Activated B cell treated with CpG ODN at 0.5 μM for 24 hours (primary cell): ENCODE measurements at regions of chr5 and their contacts with region 1.

Region 1: DNA sequence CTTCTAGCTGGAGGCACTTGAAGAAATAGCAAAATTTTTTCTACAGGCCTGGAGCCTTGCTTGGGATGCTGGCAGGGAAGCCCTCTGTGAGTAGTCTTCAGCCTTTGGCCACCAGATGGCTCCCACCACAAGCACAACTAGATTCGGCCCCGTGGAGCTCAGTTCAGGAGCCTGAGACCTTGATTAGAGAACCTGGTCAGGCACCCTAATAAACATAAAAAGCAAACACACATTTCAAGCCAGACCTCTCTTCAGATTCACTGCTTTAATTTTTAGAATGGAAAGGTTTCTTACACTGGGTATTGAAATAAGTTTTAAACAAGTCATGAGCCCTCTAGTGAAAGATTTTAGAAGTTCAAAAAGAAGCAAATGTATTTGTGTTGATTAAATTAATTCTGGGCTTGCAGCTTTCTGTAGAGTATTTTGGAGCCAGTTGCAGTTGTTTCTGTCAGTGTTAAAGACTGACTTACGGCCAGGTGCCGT is 41.4 kb downstream of the GLRX start:
- DNase-seq: peak; percentile 46
- ATAC-seq: peak; percentile 99
- H3K4me3 Mint-ChIP-seq: peak overlapping the region; percentile 21
- H3K27ac Mint-ChIP-seq: peak overlapping the region; percentile 43
- H3K4me1 Mint-ChIP-seq: peaks cover 7% of the 10 kb centered on the region
- H3K27me3 Mint-ChIP-seq: no peaks in the 10 kb centered on the region
- CTCF ChIP-seq: no peak

Region 2: GRCh38 chr5:95760273-95761191 is 20.6 kb before region 1 on chr5:
- CTCF ChIA-PET with region 1: interaction called, 11 read pairs
- POLR2A ChIA-PET with region 1: no interaction called
- intact Hi-C with region 1: no loop called
- DNase-seq: no peak
- ATAC-seq: peak; percentile 82
- H3K4me3 Mint-ChIP-seq: peak overlapping the region; percentile 74
- H3K27ac Mint-ChIP-seq: peak overlapping the region; percentile 89
- H3K4me1 Mint-ChIP-seq: peaks cover 42% of the 10 kb centered on the region
- H3K27me3 Mint-ChIP-seq: no peaks in the 10 kb centered on the region
- CTCF ChIP-seq: no peak

Region 3: DNA sequence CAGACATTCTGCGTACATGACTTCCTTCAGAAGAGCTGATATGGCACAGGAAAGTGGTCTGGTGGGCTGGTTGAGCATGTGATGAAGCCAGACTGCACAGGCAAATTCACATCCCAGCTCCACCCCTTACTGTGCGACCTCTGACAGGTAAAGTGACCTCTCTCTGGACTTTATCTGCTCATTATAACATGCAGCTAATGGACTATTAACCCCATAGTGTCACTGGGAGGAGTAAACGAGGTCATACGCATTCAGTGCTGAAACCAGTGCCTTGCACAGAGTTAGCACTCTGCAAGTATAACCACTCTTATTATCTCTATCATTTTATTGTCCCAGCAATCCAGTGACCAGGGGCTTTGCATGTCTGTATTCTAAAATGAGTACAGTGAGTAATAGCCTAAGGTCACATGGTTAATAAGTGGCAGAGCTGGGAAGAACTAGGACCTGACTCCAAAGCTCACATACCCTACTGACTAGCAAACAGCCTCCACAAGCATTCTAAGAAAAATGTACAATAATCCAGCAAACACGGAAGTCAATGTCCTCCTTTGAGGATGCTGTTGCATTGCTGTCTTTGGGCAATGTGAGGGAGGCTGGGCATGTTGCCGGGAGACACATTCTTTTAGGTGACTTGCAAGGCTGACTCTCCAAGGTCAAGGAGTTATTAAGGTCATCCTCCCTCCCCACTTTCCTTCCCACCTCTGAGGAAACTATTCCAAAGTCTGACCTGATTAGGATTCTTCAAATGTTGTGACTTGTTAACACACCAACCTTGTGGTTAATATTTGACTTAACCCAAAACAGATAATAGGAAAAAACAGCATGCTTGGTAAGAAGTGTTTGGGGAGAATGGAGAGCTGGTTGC is 22.4 kb after region 1 on chr5:
- CTCF ChIA-PET with region 1: interaction called, 63 read pairs
- POLR2A ChIA-PET with region 1: interaction called, 12 read pairs
- intact Hi-C with region 1: loop called (anchors 1 kb)
- DNase-seq: no peak
- ATAC-seq: no peak
- H3K4me3 Mint-ChIP-seq: no peak overlapping the region
- H3K27ac Mint-ChIP-seq: no peak overlapping the region
- H3K4me1 Mint-ChIP-seq: peaks cover 12% of the 10 kb centered on the region
- H3K27me3 Mint-ChIP-seq: no peaks in the 10 kb centered on the region
- CTCF ChIP-seq: no peak

Region 4: GRCh38 chr5:95822542-95823181 is 41.5 kb after region 1 on chr5 and contains the start of gene GLRX:
- CTCF ChIA-PET with region 1: interaction called, 32 read pairs
- POLR2A ChIA-PET with region 1: interaction called, 16 read pairs
- intact Hi-C with region 1: loop called (anchors 1 kb)
- DNase-seq: no peak
- ATAC-seq: peak; percentile 30
- H3K4me3 Mint-ChIP-seq: peak within 1 kb of the TSS; percentile 95
- H3K27ac Mint-ChIP-seq: peak within 1 kb of the TSS; percentile 98
- H3K4me1 Mint-ChIP-seq: peaks cover 72% of the 10 kb centered on the region
- H3K27me3 Mint-ChIP-seq: no peaks in the 10 kb centered on the region
- CTCF ChIP-seq: no peak
- total RNA-seq, gene GLRX: 55.4 and 60.2 TPM in 2 replicates

Region 5: DNA sequence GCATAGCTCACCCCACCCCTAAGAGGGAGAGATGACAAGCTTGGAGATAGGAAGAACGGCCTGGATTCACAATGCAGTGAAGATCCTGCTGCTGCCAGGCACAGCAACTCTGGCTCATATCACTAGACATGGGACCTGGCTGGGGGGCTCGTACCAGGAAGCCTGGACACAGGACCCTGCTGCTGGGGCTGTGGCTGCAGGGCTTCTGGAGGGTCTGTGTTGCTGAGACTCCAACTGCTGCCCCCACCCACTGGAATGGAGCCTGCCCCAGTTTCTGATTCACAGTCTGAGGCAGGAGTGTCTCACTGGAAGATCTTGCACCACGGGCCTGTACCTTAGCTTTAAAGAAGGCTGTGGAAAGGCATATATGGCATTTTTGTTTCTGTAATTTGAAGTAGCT is 72.3 kb after region 1 on chr5:
- CTCF ChIA-PET with region 1: interaction called, 389 read pairs
- POLR2A ChIA-PET with region 1: no interaction called
- intact Hi-C with region 1: no loop called
- DNase-seq: no peak
- ATAC-seq: no peak
- H3K4me3 Mint-ChIP-seq: no peak overlapping the region
- H3K27ac Mint-ChIP-seq: no peak overlapping the region
- H3K4me1 Mint-ChIP-seq: no peaks in the 10 kb centered on the region
- H3K27me3 Mint-ChIP-seq: no peaks in the 10 kb centered on the region
- CTCF ChIP-seq: no peak

Region 6: DNA sequence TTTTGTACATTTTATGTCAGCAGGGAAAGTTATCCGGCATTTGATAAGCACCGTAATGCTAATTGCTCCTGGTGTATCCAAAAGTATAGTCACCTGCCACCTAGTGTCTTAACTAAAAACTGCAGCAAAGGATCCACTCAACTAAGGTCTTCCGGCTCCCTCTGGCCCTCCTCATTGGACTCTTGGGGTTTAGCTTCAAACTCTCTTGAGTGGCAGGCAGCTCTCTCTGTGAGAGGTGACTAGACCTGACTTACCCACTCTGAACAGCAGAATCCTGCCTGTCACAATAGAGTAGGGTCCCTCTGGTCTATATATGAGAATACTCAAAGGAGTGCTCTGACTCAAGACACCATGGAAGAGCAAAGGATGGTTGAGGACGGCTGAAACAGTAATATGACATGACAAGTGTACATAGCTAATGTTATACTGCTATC is 820.7 kb after region 1 on chr5:
- CTCF ChIA-PET with region 1: no interaction called
- POLR2A ChIA-PET with region 1: no interaction called
- intact Hi-C with region 1: loop called (anchors 10 kb)
- DNase-seq: no peak
- ATAC-seq: peak; percentile 75
- H3K4me3 Mint-ChIP-seq: no peak overlapping the region
- H3K27ac Mint-ChIP-seq: no peak overlapping the region
- H3K4me1 Mint-ChIP-seq: no peaks in the 10 kb centered on the region
- H3K27me3 Mint-ChIP-seq: no peaks in the 10 kb centered on the region
- CTCF ChIP-seq: peak; percentile 45